ENCODE measurements at regions of chr12 and their contacts with region 1.

Region 1: GRCh38 chr12:22544038-22544979 is at the start of gene C2CD5:
- ATAC-seq: peak; percentile 82 to 91 (median 84)
- H3K4me3 ChIP-seq: peak within 1 kb of the TSS; percentile 54 to 75 (median 62)
- H3K27ac ChIP-seq: peak within 1 kb of the TSS; percentile 96 to 97
- H3K4me1 ChIP-seq: peaks cover 7 to 16% of the 10 kb centered on the region in 2 donors
- total RNA-seq, gene C2CD5: 25.4 to 54.0 (median 34.0) TPM

Region 2: DNA sequence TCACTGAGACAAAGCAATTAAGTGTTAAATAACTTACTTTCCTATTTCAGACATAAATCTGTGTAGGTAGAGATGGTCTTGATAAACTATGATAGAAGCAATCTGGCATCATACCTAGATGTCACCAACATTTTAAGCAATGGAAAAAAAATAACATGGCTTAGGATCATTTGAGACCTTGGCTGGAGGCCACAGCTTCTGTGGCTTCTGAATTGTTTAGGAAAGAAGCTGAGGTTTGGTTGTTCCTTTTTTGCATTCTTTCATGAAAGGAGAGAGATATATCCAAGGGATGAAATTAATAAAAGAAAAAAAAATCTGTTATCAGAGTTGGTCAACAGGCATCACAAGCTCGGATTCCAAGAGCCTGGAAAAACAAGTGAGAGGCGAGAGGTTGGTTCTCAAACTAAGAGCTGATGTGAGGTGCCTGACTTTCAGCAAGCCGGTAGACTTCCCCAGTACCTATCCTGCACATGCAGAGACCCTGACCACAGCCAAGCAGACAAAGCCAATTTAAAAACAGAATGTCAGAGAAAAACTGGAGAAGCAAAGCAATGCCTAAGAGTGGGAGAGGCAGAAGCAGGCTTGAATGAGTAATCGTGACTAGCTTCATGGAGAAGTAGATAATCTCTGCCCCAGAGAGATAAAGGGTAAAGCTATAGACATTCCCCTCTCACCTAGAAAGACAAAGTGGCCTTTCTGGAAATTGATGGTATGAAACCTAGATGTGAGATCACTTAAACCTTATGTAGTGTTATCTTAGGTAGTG is 166.4 kb before region 1 on chr12:
- in situ Hi-C with region 1: no loop called
- ATAC-seq: no peak
- H3K4me3 ChIP-seq: no peak overlapping the region
- H3K27ac ChIP-seq: no peak overlapping the region
- H3K4me1 ChIP-seq: no peaks in the 10 kb centered on the region

Region 3: GRCh38 chr12:22624870-22625761 is 80.8 kb after region 1 on chr12 and contains the start of gene ETNK1:
- in situ Hi-C with region 1: loop called in 1 of 9 experiments (anchors 25 kb)
- ATAC-seq: peak; percentile 94 to 98 (median 96)
- H3K4me3 ChIP-seq: peak within 1 kb of the TSS; percentile 75 to 96 (median 93)
- H3K27ac ChIP-seq: peak within 1 kb of the TSS; percentile 98 to 99
- H3K4me1 ChIP-seq: peaks cover 11 to 18% of the 10 kb centered on the region in 2 donors
- total RNA-seq, gene ETNK1: 45.1 to 93.4 (median 58.4) TPM

Region 4: GRCh38 chr12:22641353-22642053 is 97.2 kb after region 1 on chr12:
- in situ Hi-C with region 1: loop called in 2 of 9 experiments (anchors 10 to 25 kb)
- ATAC-seq: peak in 1 of 8 experiments; percentile 18
- H3K4me3 ChIP-seq: no peak overlapping the region
- H3K27ac ChIP-seq: no peak overlapping the region
- H3K4me1 ChIP-seq: no peaks in the 10 kb centered on the region

Measured in motor neuron (in vitro differentiated cells).